CD8-positive, alpha-beta T cell (primary cell): ENCODE measurements at regions of chr15 and their contacts with region 1.

Region 1: GRCh38 chr15:74988007-74988800 is 7.2 kb upstream of the SCAMP5 start:
- DNase-seq: peak in 6 of 9 experiments; percentile 25 to 54 (median 30)
- ATAC-seq: peak; percentile 69
- H3K4me3 ChIP-seq: no peak overlapping the region
- H3K4me3 Mint-ChIP-seq: no peak overlapping the region
- H3K27ac ChIP-seq: no peak overlapping the region
- H3K27ac Mint-ChIP-seq: no peak overlapping the region
- H3K4me1 ChIP-seq: no peaks in the 10 kb centered on the region
- H3K4me1 Mint-ChIP-seq: no peaks in the 10 kb centered on the region
- H3K27me3 ChIP-seq: no peaks in the 10 kb centered on the region
- H3K27me3 Mint-ChIP-seq: peaks cover 9% of the 10 kb centered on the region
- CTCF ChIP-seq: peak; percentile 28

Region 2: DNA sequence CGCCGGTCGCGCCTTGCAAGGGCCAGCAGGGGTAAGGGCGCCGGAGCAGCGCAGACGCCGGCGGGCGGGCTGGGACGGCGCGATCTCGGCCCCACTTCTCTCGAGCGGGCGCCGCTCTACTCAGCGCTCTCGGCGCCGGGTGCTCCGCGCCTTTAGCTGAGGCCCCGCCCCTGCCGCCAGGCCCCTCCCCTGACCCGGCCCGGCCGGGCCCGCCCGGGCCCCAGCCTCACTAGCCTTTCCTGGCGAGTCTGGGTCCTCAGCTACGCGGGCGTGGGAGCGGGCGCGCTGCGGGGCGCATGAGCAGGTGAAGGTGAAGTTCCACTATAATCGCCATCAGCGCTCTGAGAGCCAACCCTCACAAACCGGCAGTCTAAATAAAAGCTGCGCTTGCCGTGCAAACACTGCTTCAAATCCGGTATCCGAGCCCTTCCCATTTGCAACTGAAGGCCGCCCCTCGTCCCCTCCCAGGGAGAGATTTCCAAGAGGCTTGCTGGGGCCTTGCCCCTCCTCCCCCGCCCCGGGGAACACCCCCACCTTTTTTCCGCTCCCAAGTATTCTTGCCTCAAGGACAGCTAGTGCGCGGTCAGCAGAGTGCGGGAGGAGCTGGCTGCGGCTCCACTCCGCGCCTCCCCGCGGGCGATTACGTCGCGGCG is 31.4 kb before region 1 on chr15 and contains the start of gene RPP25:
- CTCF ChIA-PET with region 1: interaction called, 3 read pairs
- POLR2A ChIA-PET with region 1: interaction called, 3 read pairs
- intact Hi-C with region 1: loop called in 1 of 2 experiments (anchors 1 kb)
- DNase-seq: peak; percentile 22 to 78 (median 66)
- ATAC-seq: peak; percentile 89
- H3K4me3 ChIP-seq: peak within 1 kb of the TSS; percentile 56 to 65
- H3K4me3 Mint-ChIP-seq: peak within 1 kb of the TSS; percentile 81
- H3K27ac ChIP-seq: no peak within 1 kb of the TSS
- H3K27ac Mint-ChIP-seq: no peak within 1 kb of the TSS
- H3K4me1 ChIP-seq: peaks cover 26% of the 10 kb centered on the region
- H3K4me1 Mint-ChIP-seq: peaks cover 30% of the 10 kb centered on the region
- H3K27me3 ChIP-seq: peaks cover 17 to 28% of the 10 kb centered on the region in 2 experiments
- H3K27me3 Mint-ChIP-seq: peaks cover 25% of the 10 kb centered on the region
- CTCF ChIP-seq: no peak
- total RNA-seq, gene RPP25: 0.22 to 0.28 TPM